Right lobe of liver (tissue), 6 donors: ENCODE measurements at regions of chr4 and their contacts with region 1.

Region 1: GRCh38 chr4:73653695-73654106 is 33.5 kb upstream of the RASSF6 start:
- DNase-seq: peak; percentile 59 to 72 (median 59)
- ATAC-seq: peak; percentile 96 to 98 (median 96)
- H3K4me3 ChIP-seq: no peak overlapping the region
- H3K27ac ChIP-seq: peak overlapping the region in 1 of 3 donors; percentile 16
- H3K4me1 ChIP-seq: peaks cover 0 to 4% (median 2%) of the 10 kb centered on the region in 4 donors
- H3K27me3 ChIP-seq: no peaks in the 10 kb centered on the region
- CTCF ChIP-seq: peak; percentile 58 to 69 (median 63)
- POLR2A ChIP-seq: no peak

Region 2: GRCh38 chr4:73417973-73418372 is 235.7 kb before region 1 on chr4:
- intact Hi-C with region 1: no loop called
- DNase-seq: no peak
- ATAC-seq: no peak
- H3K4me3 ChIP-seq: no peak overlapping the region
- H3K27ac ChIP-seq: no peak overlapping the region
- H3K4me1 ChIP-seq: peaks cover 0 to 3% (median 0%) of the 10 kb centered on the region in 4 donors
- H3K27me3 ChIP-seq: no peaks in the 10 kb centered on the region
- CTCF ChIP-seq: no peak
- POLR2A ChIP-seq: peak; percentile 60

Region 3: DNA sequence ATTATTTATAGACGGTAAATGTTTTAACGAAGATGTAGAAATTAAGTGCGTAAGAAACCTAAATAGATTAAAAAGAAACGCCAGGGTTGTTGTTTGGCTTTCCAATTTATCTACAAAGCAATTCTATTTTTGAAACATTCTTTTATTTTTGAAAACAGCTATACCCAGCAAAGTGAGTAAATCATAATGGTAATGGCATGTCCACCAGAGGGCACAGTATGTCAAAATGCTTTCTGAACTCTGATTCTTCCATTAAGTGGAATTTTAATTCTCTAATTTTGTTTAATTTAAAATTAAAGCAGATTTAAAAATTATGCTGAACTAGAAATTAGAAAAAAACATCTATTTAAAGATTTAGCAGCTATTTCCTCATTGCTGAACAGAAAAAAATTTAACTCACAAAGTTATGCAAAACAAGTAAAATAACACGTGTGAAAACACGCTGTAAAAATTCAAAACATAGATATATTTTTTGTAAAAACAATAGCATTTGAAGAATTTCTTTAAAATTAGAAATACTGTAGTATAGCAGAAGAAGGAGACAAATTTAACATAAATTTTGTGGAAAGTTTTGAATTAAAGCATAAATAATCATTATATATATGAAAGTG is 60.0 kb before region 1 on chr4:
- intact Hi-C with region 1: loop called in 1 of 2 experiments (anchors 10 kb)
- DNase-seq: no peak
- ATAC-seq: no peak
- H3K4me3 ChIP-seq: no peak overlapping the region
- H3K27ac ChIP-seq: no peak overlapping the region
- H3K4me1 ChIP-seq: peaks cover 0 to 22% (median 0%) of the 10 kb centered on the region in 4 donors
- H3K27me3 ChIP-seq: no peaks in the 10 kb centered on the region
- CTCF ChIP-seq: peak; percentile 59 to 67 (median 62)
- POLR2A ChIP-seq: no peak

Region 4: GRCh38 chr4:74133786-74134499 is 480.2 kb after region 1 on chr4:
- intact Hi-C with region 1: loop called in 1 of 2 experiments (anchors 10 kb)
- DNase-seq: peak; percentile 60 to 80 (median 67)
- ATAC-seq: peak; percentile 99 to 100 (median 100)
- H3K4me3 ChIP-seq: no peak overlapping the region
- H3K27ac ChIP-seq: peak overlapping the region in 2 of 3 donors; percentile 2 to 28
- H3K4me1 ChIP-seq: peaks cover 0 to 5% (median 0%) of the 10 kb centered on the region in 4 donors
- H3K27me3 ChIP-seq: no peaks in the 10 kb centered on the region
- CTCF ChIP-seq: peak; percentile 80 to 90 (median 86)
- POLR2A ChIP-seq: no peak